ENCODE measurements at regions of chr1 and their contacts with region 1.

Region 1: GRCh38 chr1:40979233-40980067 is at the start of gene CTPS1:
- DNase-seq: peak; percentile 89 to 96
- ATAC-seq: peak; percentile 72 to 78
- H3K4me3 ChIP-seq: peak within 1 kb of the TSS; percentile 93
- H3K27ac ChIP-seq: peak within 1 kb of the TSS; percentile 99 to 100
- H3K4me1 ChIP-seq: peaks cover 60% of the 10 kb centered on the region
- CTCF ChIP-seq: peak; percentile 24; the same call in 1 of the 3 replicates
- EP300 ChIP-seq: no peak
- POLR2A ChIP-seq: peak; percentile 55
- RAD21 ChIP-seq: no peak
- polyA plus RNA-seq, gene CTPS1: 145 and 181 TPM in 2 replicates

Region 2: GRCh38 chr1:40936931-40937339 is 42.5 kb before region 1 on chr1:
- CTCF ChIA-PET with region 1: no interaction called
- POLR2A ChIA-PET with region 1: no interaction called
- DNase-seq: no peak
- ATAC-seq: no peak
- H3K4me3 ChIP-seq: no peak overlapping the region
- H3K27ac ChIP-seq: peak overlapping the region; percentile 35 to 94; a peak in 5 of 6 replicates
- H3K4me1 ChIP-seq: peaks cover 40% of the 10 kb centered on the region
- CTCF ChIP-seq: no peak
- EP300 ChIP-seq: no peak
- POLR2A ChIP-seq: no peak
- RAD21 ChIP-seq: no peak

Region 3: DNA sequence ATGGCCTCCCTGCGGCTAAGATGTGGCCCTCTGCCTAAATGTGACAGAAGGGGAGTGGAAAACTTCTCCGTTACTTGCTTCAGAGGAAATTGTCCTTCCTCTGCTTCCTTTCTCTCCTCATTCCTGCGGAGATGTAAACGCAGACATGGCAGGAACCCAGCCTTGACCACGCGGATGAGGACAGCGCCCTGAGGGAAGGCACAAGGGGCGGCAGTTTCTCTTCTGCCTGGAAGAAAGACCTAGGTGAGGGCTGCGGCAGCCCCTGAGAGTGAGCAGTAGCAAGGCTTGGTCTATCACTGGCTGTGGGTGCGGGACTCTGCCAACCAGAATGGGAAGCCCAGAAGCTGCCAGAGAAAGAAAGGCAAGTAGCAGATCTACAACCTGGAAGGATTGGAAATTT is 13.9 kb before region 1 on chr1:
- CTCF ChIA-PET with region 1: interaction called, 4 read pairs
- POLR2A ChIA-PET with region 1: interaction called, 10 read pairs
- DNase-seq: no peak
- ATAC-seq: no peak
- H3K4me3 ChIP-seq: no peak overlapping the region
- H3K27ac ChIP-seq: peak overlapping the region; percentile 99 to 100
- H3K4me1 ChIP-seq: peaks cover 32% of the 10 kb centered on the region
- CTCF ChIP-seq: no peak
- EP300 ChIP-seq: no peak
- POLR2A ChIP-seq: no peak
- RAD21 ChIP-seq: no peak

Region 4: GRCh38 chr1:41003640-41004220 is 24.3 kb after region 1 on chr1:
- CTCF ChIA-PET with region 1: interaction called, 12 read pairs
- POLR2A ChIA-PET with region 1: interaction called, 16 read pairs
- DNase-seq: peak; percentile 79 to 90
- ATAC-seq: peak; percentile 78 to 81
- H3K4me3 ChIP-seq: no peak overlapping the region
- H3K27ac ChIP-seq: peak overlapping the region; percentile 47 to 74; a peak in 4 of 6 replicates
- H3K4me1 ChIP-seq: peaks cover 85% of the 10 kb centered on the region
- CTCF ChIP-seq: peak; percentile 48
- EP300 ChIP-seq: no peak
- POLR2A ChIP-seq: no peak
- RAD21 ChIP-seq: peak; percentile 49 to 55